ENCODE measurements at regions of chr14 and their contacts with region 1.

Region 1: DNA sequence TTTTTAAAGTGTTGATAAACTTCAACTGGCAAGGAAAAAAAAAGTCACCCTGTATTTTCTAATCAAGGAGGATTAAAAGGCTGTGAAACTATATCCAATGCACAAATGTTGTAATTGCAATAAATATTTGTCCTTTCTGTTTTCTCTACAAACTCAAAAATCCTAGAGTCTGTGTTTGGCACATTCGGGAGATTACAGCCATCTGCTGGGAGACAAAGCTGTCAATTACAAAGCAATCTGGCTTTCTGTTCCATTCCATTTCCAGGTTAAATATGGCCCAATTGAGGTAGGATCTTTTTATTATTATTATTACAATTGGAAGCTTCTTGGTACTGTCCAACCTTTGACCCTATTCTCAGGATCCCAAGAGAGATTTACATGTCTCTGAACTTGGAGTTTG is 295.9 kb downstream of the DIO2 start:
- DNase-seq: no peak

Region 2: GRCh38 chr14:79809849-79810612 is 105.4 kb before region 1 on chr14:
- intact Hi-C with region 1: loop called (anchors 10 kb)
- DNase-seq: peak in 1 of 10 donors; percentile 41

Region 3: GRCh38 chr14:79825046-79825521 is 90.3 kb before region 1 on chr14:
- intact Hi-C with region 1: no loop called
- DNase-seq: peak in 1 of 10 donors; percentile 41

Measured in posterior cingulate gyrus (tissue), 11 donors.